Cardiac septum (tissue), 1 donor: ENCODE measurements at regions of chr3 and their contacts with region 1.

Region 1: GRCh38 chr3:37210230-37210629 is 35.8 kb upstream of the LRRFIP2 start:
- DNase-seq: no peak

Region 2: GRCh38 chr3:36729204-36730056 is 480.8 kb before region 1 on chr3:
- intact Hi-C with region 1: loop called (anchors 10 kb)
- DNase-seq: no peak

Region 3: DNA sequence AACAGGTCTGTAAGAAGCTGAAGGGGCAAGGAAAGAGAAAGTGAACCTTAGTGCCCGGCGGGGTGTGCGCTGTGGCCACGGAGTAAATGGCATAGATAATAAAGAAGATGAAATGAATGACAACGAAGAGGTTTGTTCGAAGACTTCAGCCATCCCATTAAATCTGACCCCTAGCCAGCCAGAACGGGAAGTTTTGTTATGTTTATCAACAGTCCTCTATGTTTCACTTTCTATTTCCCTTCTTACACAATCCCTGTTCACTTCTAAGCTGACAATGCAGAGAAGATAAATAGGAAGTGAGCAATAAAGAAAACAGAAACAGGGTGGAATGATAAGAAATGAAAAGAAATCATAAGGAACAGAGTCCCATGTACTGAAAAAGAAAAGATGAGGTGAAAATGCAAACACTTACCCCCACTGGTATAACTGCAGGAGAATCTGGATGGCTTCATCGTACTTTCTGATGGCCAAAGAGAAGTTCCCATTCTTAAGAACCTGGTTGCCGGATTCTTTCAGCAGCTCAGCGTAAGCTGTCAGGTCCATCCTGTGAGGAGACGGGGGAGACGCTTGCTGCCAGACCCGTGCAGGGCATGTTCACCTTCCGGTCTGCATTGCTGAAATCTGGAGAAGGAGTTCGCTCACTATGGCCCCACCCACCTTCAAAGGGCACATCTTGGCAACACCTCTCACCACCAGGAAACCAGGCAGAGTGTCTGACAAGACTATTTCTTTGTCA is 302.2 kb before region 1 on chr3:
- intact Hi-C with region 1: loop called (anchors 10 kb)
- DNase-seq: peak; percentile 86

Region 4: DNA sequence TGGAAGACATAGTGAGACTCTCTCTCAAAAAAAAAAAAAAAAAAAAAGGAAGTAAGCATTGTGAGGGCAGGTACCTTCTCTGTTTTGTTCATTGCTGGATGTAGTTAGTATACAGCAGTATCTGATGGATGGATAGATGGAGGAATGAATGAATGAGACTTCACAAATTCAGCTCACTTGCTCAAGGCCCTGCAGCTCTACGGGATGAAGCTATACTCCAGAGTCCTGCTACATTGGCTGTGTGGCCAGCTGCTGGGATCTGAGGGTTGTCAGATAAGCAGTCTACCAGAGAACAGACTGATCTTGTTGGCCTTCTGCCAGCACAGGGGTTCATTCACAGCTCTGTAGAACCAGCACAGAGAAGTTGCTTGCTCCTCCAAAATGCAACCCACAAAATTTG is 181.9 kb before region 1 on chr3:
- intact Hi-C with region 1: loop called (anchors 5 kb)
- DNase-seq: no peak

Region 5: DNA sequence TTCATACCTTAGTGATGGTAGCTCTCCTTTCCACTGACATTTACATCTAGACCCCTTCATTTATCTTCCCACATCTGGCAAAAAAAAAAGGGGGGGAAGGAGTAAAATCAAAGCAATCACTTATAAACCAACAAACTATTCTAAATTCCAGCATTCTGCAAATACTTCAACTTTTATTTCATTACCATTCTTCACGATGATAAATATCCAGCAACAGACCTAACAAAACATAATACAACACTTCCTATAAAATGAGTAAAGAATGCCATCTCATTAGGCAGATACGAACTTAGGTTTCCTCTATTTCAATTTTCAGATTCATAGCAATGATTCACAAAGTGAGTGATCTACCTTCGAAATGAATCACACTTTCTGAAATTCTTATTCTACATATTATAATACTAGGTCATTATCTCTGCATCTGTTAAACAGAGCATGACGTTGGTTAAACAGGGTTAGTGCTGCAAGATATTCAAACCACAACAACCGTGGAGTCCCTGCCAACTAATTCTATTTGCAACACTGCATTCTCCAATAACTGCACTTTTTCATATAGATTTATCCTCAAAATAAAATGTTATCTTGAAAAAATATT is 35.6 kb before region 1 on chr3 and contains the start of gene LRRFIP2:
- intact Hi-C with region 1: loop called (anchors 5 kb)
- DNase-seq: no peak
- total RNA-seq, gene LRRFIP2: 135 TPM